ENCODE measurements at regions of chr11 and their contacts with region 1.

Region 1: DNA sequence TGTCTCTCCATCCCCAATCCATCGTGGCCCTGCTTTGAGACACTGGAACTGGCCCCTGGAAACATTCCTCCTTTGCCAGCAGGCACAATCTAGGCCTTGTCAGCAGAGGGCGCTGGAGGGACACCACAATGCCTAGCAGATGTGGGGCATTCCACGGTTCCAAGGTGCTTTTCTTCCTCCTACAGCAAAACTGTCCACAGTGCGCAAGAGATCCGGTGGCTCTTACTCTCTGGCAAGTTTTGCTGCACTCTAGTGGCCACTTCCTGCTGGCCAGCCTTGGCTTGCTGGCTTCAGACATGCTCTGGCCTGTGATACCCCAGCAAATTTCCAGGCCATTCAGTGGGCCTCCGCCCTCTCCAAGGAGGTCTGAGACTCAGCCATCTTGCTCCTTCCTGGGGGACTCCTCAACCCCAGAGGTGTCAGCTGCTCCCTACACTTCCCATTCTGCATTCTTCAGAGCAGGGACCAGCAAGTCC is 17.1 kb upstream of the RBM4B start:
- DNase-seq: peak; percentile 94
- H3K4me3 ChIP-seq: no peak overlapping the region
- H3K27ac ChIP-seq: no peak overlapping the region
- H3K4me1 ChIP-seq: peaks cover 5% of the 10 kb centered on the region
- H3K27me3 ChIP-seq: no peaks in the 10 kb centered on the region
- CTCF ChIP-seq: peak; percentile 97 to 98

Region 2: GRCh38 chr11:66408488-66409214 is 286.1 kb before region 1 on chr11:
- CTCF ChIA-PET with region 1: no interaction called
- dilution Hi-C with region 1: loop called (anchors 25 kb)
- in situ Hi-C with region 1: loop called in 1 of 2 experiments (anchors 25 kb)
- intact Hi-C with region 1: loop called (anchors 1 kb)
- DNase-seq: peak; percentile 76
- H3K4me3 ChIP-seq: peak overlapping the region in 2 of 3 experiments; percentile 18 to 29
- H3K27ac ChIP-seq: no peak overlapping the region
- H3K4me1 ChIP-seq: peaks cover 4% of the 10 kb centered on the region
- H3K27me3 ChIP-seq: no peaks in the 10 kb centered on the region
- CTCF ChIP-seq: peak; percentile 99 to 100

Region 3: GRCh38 chr11:66766681-66767080 is 71.9 kb after region 1 on chr11:
- CTCF ChIA-PET with region 1: no interaction called
- dilution Hi-C with region 1: no loop called
- in situ Hi-C with region 1: no loop called
- intact Hi-C with region 1: loop called (anchors 1 kb)
- DNase-seq: no peak
- H3K4me3 ChIP-seq: no peak overlapping the region
- H3K27ac ChIP-seq: no peak overlapping the region
- H3K4me1 ChIP-seq: peaks cover 20% of the 10 kb centered on the region
- H3K27me3 ChIP-seq: no peaks in the 10 kb centered on the region
- CTCF ChIP-seq: no peak

Region 4: DNA sequence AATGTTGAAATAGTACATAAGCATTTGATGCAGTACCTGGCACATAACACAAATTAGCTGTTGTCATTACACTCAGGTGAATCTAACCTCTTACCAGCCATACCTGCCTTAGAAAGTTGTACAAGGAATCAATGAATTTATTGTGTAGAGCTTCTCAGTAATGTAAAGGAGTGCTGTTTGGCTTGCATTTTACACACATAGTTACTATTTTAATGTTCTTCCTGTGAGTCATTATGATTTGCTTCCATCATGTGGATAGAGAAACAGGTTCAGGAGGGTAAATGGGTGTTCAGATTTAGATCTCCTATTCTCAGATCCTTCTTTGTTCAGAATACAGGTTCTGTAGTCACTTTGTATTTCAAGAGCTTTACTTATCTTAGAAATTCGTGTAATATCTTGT is 120.9 kb after region 1 on chr11:
- CTCF ChIA-PET with region 1: interaction called, 3 read pairs
- dilution Hi-C with region 1: no loop called
- in situ Hi-C with region 1: no loop called
- intact Hi-C with region 1: loop called (anchors 5 kb)
- DNase-seq: peak; percentile 75
- H3K4me3 ChIP-seq: no peak overlapping the region
- H3K27ac ChIP-seq: peak overlapping the region; percentile 61
- H3K4me1 ChIP-seq: peaks cover 21% of the 10 kb centered on the region
- H3K27me3 ChIP-seq: no peaks in the 10 kb centered on the region
- CTCF ChIP-seq: no peak

Region 5: DNA sequence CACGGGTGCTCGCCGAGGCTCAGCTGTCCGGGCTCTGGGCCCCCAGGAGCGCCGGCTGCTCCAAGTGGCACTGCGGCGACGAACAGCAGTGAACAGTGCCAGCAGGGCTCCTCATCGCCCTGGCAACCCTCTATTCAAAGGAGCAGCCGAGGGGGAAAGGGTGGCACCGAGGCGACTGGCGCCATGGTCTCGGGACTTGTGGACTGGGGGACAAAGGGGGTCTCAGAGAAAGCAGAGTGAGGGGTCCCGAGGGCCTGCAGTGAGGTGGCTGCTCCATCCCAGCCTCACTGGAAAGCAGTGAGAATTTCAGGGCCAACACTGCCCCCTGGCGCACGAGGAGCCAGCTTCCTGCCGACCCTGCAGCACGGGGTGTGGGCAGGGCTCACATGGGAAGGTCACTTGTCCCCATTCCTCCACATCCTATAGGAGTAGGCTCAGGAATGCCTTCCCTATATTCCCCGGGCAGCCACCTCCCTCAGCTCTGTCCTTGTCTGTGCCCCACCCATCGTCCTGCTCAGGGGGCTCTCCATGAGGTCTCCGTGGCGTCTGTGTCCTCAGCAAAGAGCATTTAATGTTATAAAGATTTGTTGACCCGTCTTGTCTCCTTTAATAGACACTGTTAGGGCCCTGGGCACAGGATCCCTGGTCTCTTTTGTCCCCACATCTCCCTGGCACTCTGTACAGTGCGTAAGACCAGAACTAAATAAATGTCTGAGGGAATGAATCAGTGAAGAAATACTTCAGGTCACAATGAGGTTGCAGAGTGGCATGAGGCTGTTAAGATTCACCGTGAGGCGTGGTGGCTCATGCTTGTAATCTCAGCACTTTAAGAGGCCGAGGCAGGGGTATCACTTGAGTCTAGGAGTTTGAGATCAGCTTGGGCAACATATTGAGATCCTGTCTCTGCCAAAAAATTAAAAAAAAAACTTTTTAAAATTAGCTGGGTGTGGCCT is 188.5 kb after region 1 on chr11:
- CTCF ChIA-PET with region 1: no interaction called
- dilution Hi-C with region 1: no loop called
- in situ Hi-C with region 1: no loop called
- intact Hi-C with region 1: loop called (anchors 1 kb)
- DNase-seq: peak; percentile 60
- H3K4me3 ChIP-seq: no peak overlapping the region
- H3K27ac ChIP-seq: no peak overlapping the region
- H3K4me1 ChIP-seq: peaks cover 38% of the 10 kb centered on the region
- H3K27me3 ChIP-seq: no peaks in the 10 kb centered on the region
- CTCF ChIP-seq: peak; percentile 62 to 76

Region 6: GRCh38 chr11:67022328-67022927 is 327.7 kb after region 1 on chr11:
- CTCF ChIA-PET with region 1: no interaction called
- dilution Hi-C with region 1: no loop called
- in situ Hi-C with region 1: no loop called
- intact Hi-C with region 1: loop called (anchors 5 kb)
- DNase-seq: peak; percentile 79
- H3K4me3 ChIP-seq: peak overlapping the region in 1 of 3 experiments; percentile 44
- H3K27ac ChIP-seq: peak overlapping the region; percentile 37
- H3K4me1 ChIP-seq: peaks cover 41% of the 10 kb centered on the region
- H3K27me3 ChIP-seq: no peaks in the 10 kb centered on the region
- CTCF ChIP-seq: no peak